ENCODE measurements at regions of chr19 and their contacts with region 1.

Region 1: GRCh38 chr19:4803736-4804695 is 12.5 kb downstream of the FEM1A start:
- DNase-seq: peak in 1 of 2 donors; percentile 68
- ATAC-seq: peak in 1 of 2 donors; percentile 13
- H3K4me3 ChIP-seq: no peak overlapping the region
- H3K27ac ChIP-seq: peak overlapping the region; percentile 91 to 100 (median 94)
- H3K4me1 ChIP-seq: peaks cover 24 to 25% of the 10 kb centered on the region in 2 donors
- H3K27me3 ChIP-seq: no peaks in the 10 kb centered on the region
- CTCF ChIP-seq: peak; percentile 80 to 94 (median 89)
- POLR2A ChIP-seq: no peak

Region 2: GRCh38 chr19:4723367-4724187 is 80.4 kb before region 1 on chr19 and contains the start of gene DPP9:
- in situ Hi-C with region 1: no loop called
- intact Hi-C with region 1: loop called (anchors 2 kb)
- DNase-seq: peak; percentile 97 to 99
- ATAC-seq: peak; percentile 92 to 94
- H3K4me3 ChIP-seq: peak within 1 kb of the TSS; percentile 76 to 100 (median 94)
- H3K27ac ChIP-seq: peak within 1 kb of the TSS; percentile 79 to 99 (median 96)
- H3K4me1 ChIP-seq: peaks cover 12 to 18% of the 10 kb centered on the region in 2 donors
- H3K27me3 ChIP-seq: no peaks in the 10 kb centered on the region
- CTCF ChIP-seq: peak in 4 of 5 experiments; percentile 18 to 68 (median 38)
- POLR2A ChIP-seq: peak; percentile 93 to 97
- total RNA-seq, gene DPP9: 92.6 to 208 (median 148) TPM

Region 3: DNA sequence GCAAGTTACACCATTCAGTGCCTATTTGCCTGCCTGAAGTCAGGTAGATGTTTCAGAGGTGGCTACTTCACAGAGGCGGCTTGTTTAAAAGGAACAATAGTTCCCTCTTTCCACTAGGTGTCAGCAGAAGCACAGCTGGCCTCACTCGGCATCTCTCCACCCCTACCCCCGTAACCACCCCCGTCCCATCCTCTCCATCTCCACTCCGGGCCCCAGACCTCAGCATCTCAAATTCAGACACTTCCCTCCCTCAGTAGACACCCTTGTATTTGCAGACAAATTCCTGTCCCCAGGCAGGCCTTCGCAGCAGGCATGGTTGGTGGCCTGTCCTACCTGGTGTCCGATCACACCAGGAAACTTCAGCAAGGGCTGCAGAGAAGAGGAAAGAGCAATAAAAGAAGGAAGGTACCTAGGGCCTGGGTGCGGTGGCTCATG is 71.3 kb before region 1 on chr19:
- in situ Hi-C with region 1: loop called in 3 of 4 experiments (anchors 5 kb)
- intact Hi-C with region 1: loop called (anchors 1 kb)
- DNase-seq: peak in 1 of 2 donors; percentile 37
- ATAC-seq: peak; percentile 90 to 93
- H3K4me3 ChIP-seq: no peak overlapping the region
- H3K27ac ChIP-seq: no peak overlapping the region
- H3K4me1 ChIP-seq: no peaks in the 10 kb centered on the region
- H3K27me3 ChIP-seq: no peaks in the 10 kb centered on the region
- CTCF ChIP-seq: peak; percentile 43 to 83 (median 79)
- POLR2A ChIP-seq: no peak

Region 4: GRCh38 chr19:4744451-4745174 is 59.4 kb before region 1 on chr19:
- in situ Hi-C with region 1: no loop called
- intact Hi-C with region 1: no loop called
- DNase-seq: peak; percentile 23 to 43
- ATAC-seq: peak; percentile 86 to 93
- H3K4me3 ChIP-seq: peak overlapping the region in 1 of 4 donors; percentile 9
- H3K27ac ChIP-seq: peak overlapping the region; percentile 5 to 72 (median 42)
- H3K4me1 ChIP-seq: peaks cover 4 to 14% of the 10 kb centered on the region in 2 donors
- H3K27me3 ChIP-seq: peaks cover 5 to 9% (median 5%) of the 10 kb centered on the region in 3 donors
- CTCF ChIP-seq: no peak
- POLR2A ChIP-seq: no peak

Region 5: DNA sequence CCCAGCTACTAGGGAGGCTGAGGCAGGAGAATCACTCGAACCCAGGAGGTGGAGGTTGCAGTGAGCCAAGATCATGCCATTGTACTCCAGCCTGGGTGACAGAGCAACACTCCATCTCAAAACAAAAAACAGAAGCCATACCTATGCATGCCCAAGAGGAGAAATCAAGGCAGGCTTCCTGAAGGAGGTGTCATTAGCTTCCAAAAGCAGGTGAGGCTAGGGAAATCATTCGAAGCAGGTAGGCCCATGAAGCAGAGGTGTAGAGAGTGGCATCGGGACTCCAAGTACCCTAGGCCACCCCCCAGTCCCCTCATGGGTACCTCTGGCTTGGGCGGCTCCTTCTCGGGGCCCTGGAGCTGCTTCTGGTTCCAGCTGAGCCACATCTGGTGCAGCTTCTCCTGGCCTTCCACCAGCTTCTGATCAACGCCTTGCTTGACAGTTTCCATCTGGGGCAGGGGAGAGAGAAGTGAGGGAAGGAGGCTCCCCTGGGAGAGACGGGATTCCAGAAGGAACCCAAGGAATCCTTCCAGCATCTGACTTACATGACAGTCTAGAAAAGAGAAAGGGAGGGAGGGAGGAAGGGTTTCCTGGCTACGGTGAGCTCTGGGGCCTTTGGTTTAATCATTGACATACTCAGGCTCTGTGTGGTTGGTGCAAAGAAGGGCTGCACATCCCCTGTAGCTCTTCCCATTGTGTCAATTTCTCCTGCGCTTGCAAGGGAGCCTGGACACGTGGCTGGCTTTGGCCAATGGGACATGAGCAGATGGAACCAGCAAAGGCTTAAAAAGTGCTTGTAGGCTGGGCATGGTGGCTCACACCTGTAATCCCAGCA is 40.5 kb after region 1 on chr19:
- in situ Hi-C with region 1: loop called in 1 of 4 experiments (anchors 5 kb)
- intact Hi-C with region 1: no loop called
- DNase-seq: no peak
- ATAC-seq: no peak
- H3K4me3 ChIP-seq: no peak overlapping the region
- H3K27ac ChIP-seq: peak overlapping the region; percentile 40 to 76 (median 68)
- H3K4me1 ChIP-seq: peaks cover 7 to 9% of the 10 kb centered on the region in 2 donors
- H3K27me3 ChIP-seq: no peaks in the 10 kb centered on the region
- CTCF ChIP-seq: no peak
- POLR2A ChIP-seq: no peak

Region 6: GRCh38 chr19:4851551-4852290 is 47.7 kb after region 1 on chr19:
- in situ Hi-C with region 1: loop called in 3 of 4 experiments (anchors 5 to 10 kb)
- intact Hi-C with region 1: loop called (anchors 1 kb)
- DNase-seq: peak in 1 of 2 donors; percentile 75
- ATAC-seq: peak; percentile 61 to 87
- H3K4me3 ChIP-seq: no peak overlapping the region
- H3K27ac ChIP-seq: peak overlapping the region in 2 of 4 donors; percentile 12 to 16
- H3K4me1 ChIP-seq: no peaks in the 10 kb centered on the region
- H3K27me3 ChIP-seq: no peaks in the 10 kb centered on the region
- CTCF ChIP-seq: peak; percentile 83 to 97 (median 95)
- POLR2A ChIP-seq: no peak

Region 7: GRCh38 chr19:4909897-4910593 is 106.0 kb after region 1 on chr19:
- in situ Hi-C with region 1: loop called in 1 of 4 experiments (anchors 5 kb)
- intact Hi-C with region 1: loop called (anchors 1 kb)
- DNase-seq: peak; percentile 88 to 90
- ATAC-seq: peak; percentile 90
- H3K4me3 ChIP-seq: peak overlapping the region; percentile 60 to 80 (median 66)
- H3K27ac ChIP-seq: peak overlapping the region; percentile 26 to 68 (median 63)
- H3K4me1 ChIP-seq: peaks cover 18 to 20% of the 10 kb centered on the region in 2 donors
- H3K27me3 ChIP-seq: no peaks in the 10 kb centered on the region
- CTCF ChIP-seq: no peak
- POLR2A ChIP-seq: no peak

Region 8: GRCh38 chr19:4969772-4970531 is 165.9 kb after region 1 on chr19:
- in situ Hi-C with region 1: no loop called
- intact Hi-C with region 1: loop called (anchors 5 kb)
- DNase-seq: no peak
- ATAC-seq: peak in 1 of 2 donors; percentile 13
- H3K4me3 ChIP-seq: peak overlapping the region; percentile 64 to 91 (median 81)
- H3K27ac ChIP-seq: peak overlapping the region; percentile 87 to 96 (median 92)
- H3K4me1 ChIP-seq: peaks cover 49 to 50% of the 10 kb centered on the region in 2 donors
- H3K27me3 ChIP-seq: no peaks in the 10 kb centered on the region
- CTCF ChIP-seq: no peak
- POLR2A ChIP-seq: no peak

Measured in gastrocnemius medialis (tissue), 4 donors.